Sigmoid colon (tissue), 7 donors: ENCODE measurements at regions of chr5 and their contacts with region 1.

Region 1: GRCh38 chr5:126414874-126415502 is 8.2 kb upstream of the GRAMD2B start:
- DNase-seq: peak; percentile 80
- H3K4me3 ChIP-seq: no peak overlapping the region
- H3K27ac ChIP-seq: peak overlapping the region; percentile 67 to 83 (median 79)
- H3K4me1 ChIP-seq: peaks cover 0 to 38% (median 35%) of the 10 kb centered on the region in 4 donors
- H3K27me3 ChIP-seq: no peaks in the 10 kb centered on the region
- CTCF ChIP-seq: no peak
- EP300 ChIP-seq: peak in 1 of 4 donors; percentile 17
- POLR2A ChIP-seq: no peak

Region 2: DNA sequence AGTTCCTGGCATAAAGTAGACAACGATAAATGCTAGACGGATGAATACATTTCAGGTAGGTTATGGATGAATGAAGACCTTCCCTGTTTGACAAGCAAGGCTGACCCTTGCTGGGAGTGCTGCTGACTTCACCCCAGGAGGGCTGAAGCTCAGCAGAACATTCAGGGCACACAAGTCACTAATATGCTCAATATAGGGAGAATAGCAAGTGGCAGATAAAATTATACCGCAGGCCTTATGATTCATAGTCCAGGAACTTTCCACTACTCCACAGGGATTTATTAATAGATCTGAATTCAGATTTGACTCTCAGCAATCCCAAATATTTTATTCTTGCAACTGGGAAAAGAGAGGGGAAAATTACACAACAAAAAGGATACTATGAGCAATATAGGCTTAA is 30.0 kb before region 1 on chr5:
- intact Hi-C with region 1: loop called (anchors 5 kb)
- DNase-seq: no peak
- H3K4me3 ChIP-seq: no peak overlapping the region
- H3K27ac ChIP-seq: peak overlapping the region; percentile 68 to 84 (median 77)
- H3K4me1 ChIP-seq: peaks cover 0 to 63% (median 51%) of the 10 kb centered on the region in 4 donors
- H3K27me3 ChIP-seq: no peaks in the 10 kb centered on the region
- CTCF ChIP-seq: no peak
- EP300 ChIP-seq: peak in 2 of 4 donors; percentile 11 to 29
- POLR2A ChIP-seq: no peak

Region 3: GRCh38 chr5:126454081-126454480 is 39.1 kb after region 1 on chr5:
- intact Hi-C with region 1: no loop called
- DNase-seq: peak; percentile 76
- H3K4me3 ChIP-seq: no peak overlapping the region
- H3K27ac ChIP-seq: no peak overlapping the region
- H3K4me1 ChIP-seq: peaks cover 0 to 46% (median 26%) of the 10 kb centered on the region in 4 donors
- H3K27me3 ChIP-seq: no peaks in the 10 kb centered on the region
- CTCF ChIP-seq: no peak
- EP300 ChIP-seq: no peak
- POLR2A ChIP-seq: no peak

Region 4: GRCh38 chr5:126471875-126472537 is 57.0 kb after region 1 on chr5:
- intact Hi-C with region 1: no loop called
- DNase-seq: no peak
- H3K4me3 ChIP-seq: no peak overlapping the region
- H3K27ac ChIP-seq: no peak overlapping the region
- H3K4me1 ChIP-seq: peaks cover 0 to 4% (median 1%) of the 10 kb centered on the region in 4 donors
- H3K27me3 ChIP-seq: no peaks in the 10 kb centered on the region
- CTCF ChIP-seq: no peak
- EP300 ChIP-seq: no peak
- POLR2A ChIP-seq: no peak

Region 5: GRCh38 chr5:126519634-126520592 is 104.9 kb after region 1 on chr5:
- intact Hi-C with region 1: loop called (anchors 5 kb)
- DNase-seq: peak; percentile 87
- H3K4me3 ChIP-seq: peak overlapping the region in 3 of 4 donors; percentile 11 to 27 (median 25)
- H3K27ac ChIP-seq: peak overlapping the region; percentile 69 to 93 (median 78)
- H3K4me1 ChIP-seq: peaks cover 0 to 58% (median 40%) of the 10 kb centered on the region in 4 donors
- H3K27me3 ChIP-seq: no peaks in the 10 kb centered on the region
- CTCF ChIP-seq: no peak
- EP300 ChIP-seq: peak in 3 of 4 donors; percentile 24 to 36 (median 25)
- POLR2A ChIP-seq: no peak